Transverse colon (tissue), 4 donors: ENCODE measurements at regions of chr9 and their contacts with region 1.

Region 1: DNA sequence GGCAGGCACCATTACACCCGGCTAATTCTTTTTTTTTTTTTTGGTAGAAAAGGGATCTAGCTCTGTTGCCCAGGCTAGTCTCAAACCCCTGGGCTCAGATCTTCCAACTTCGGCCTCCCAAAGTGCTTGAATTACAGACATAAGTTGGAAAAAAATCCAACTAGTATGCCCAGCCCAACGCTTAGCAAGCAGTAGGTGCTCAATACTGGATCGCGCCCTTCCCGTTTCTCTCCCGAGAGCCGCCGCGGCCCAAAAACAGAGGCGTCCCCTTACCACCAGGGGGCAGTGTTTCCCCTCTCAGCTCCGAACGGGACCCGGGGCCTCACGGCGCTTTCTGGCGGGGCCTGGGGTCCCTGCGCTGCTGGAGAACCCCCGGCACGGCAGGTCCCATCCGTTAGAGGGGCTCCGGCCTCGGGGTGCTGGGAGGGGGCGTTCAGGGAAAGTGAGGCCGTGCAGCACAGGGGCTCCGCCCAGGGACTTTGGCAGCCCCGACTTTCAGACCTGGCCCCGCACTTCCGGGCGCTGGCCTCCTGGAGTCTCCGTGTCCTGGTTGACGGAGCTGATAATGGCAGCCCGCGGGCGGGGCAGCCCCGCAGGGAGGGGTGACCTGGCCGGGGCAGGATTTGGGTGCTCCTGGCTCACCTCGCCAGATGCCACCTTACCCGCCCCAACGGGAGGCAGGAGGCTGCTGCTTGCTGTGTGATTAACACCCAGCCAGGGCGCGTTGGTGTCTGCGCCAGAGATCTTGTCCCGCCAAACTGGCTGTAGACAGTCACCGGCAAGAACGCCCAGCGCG is 15.2 kb downstream of the PTGES start:
- DNase-seq: peak; percentile 90
- H3K4me3 ChIP-seq: peak overlapping the region; percentile 47 to 71 (median 58)
- H3K27ac ChIP-seq: peak overlapping the region; percentile 43 to 81 (median 74)
- H3K4me1 ChIP-seq: peaks cover 0 to 9% (median 6%) of the 10 kb centered on the region in 4 donors
- H3K27me3 ChIP-seq: peaks cover 2% of the 10 kb centered on the region
- CTCF ChIP-seq: peak; percentile 97 to 99 (median 98)
- EP300 ChIP-seq: no peak
- POLR2A ChIP-seq: no peak

Region 2: GRCh38 chr9:129695870-129696269 is 41.8 kb before region 1 on chr9:
- in situ Hi-C with region 1: no loop called
- intact Hi-C with region 1: loop called (anchors 1 kb)
- DNase-seq: no peak
- H3K4me3 ChIP-seq: no peak overlapping the region
- H3K27ac ChIP-seq: no peak overlapping the region
- H3K4me1 ChIP-seq: peaks cover 0 to 15% (median 12%) of the 10 kb centered on the region in 4 donors
- H3K27me3 ChIP-seq: peaks cover 48% of the 10 kb centered on the region
- CTCF ChIP-seq: no peak
- EP300 ChIP-seq: no peak
- POLR2A ChIP-seq: no peak